Colonic mucosa (tissue), 4 donors: ENCODE measurements at regions of chr3 and their contacts with region 1.

Region 1: DNA sequence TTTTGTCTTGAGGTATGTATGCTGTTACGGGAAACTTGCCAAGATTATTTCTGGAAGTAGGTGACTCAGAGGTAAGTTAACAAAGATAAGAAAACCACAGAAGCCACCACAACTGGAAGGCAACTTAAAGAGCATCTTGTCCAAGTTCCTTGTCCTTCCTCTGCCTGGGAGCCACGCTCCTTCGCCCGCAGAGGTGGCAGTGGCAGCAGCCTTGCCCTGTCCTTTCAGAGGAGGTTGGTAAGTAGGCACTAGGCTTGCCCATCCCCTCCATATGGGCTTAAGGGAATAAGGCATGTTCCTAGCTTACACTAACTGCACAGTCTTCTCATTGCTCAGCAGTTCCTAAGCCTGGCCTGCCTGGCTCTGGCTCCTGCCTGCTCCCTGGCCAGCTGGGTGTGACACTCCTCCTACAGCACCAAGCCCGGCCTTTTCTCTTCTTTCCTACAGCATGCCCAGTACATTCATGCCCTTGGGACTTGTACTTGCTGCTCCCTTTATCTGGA is 48.0 kb upstream of the RAB6B start:
- DNase-seq: peak; percentile 57
- H3K4me3 ChIP-seq: no peak overlapping the region
- H3K27ac ChIP-seq: no peak overlapping the region
- H3K4me1 ChIP-seq: no peaks in the 10 kb centered on the region
- H3K27me3 ChIP-seq: no peaks in the 10 kb centered on the region
- CTCF ChIP-seq: no peak

Region 2: GRCh38 chr3:133674290-133674919 is 269.3 kb before region 1 on chr3:
- intact Hi-C with region 1: no loop called
- DNase-seq: no peak
- H3K4me3 ChIP-seq: no peak overlapping the region
- H3K27ac ChIP-seq: no peak overlapping the region
- H3K4me1 ChIP-seq: no peaks in the 10 kb centered on the region
- H3K27me3 ChIP-seq: peaks cover 11% of the 10 kb centered on the region
- CTCF ChIP-seq: no peak

Region 3: GRCh38 chr3:133927540-133928066 is 16.1 kb before region 1 on chr3:
- intact Hi-C with region 1: no loop called
- DNase-seq: peak; percentile 56
- H3K4me3 ChIP-seq: peak overlapping the region; percentile 22
- H3K27ac ChIP-seq: no peak overlapping the region
- H3K4me1 ChIP-seq: no peaks in the 10 kb centered on the region
- H3K27me3 ChIP-seq: no peaks in the 10 kb centered on the region
- CTCF ChIP-seq: peak; percentile 68

Region 4: DNA sequence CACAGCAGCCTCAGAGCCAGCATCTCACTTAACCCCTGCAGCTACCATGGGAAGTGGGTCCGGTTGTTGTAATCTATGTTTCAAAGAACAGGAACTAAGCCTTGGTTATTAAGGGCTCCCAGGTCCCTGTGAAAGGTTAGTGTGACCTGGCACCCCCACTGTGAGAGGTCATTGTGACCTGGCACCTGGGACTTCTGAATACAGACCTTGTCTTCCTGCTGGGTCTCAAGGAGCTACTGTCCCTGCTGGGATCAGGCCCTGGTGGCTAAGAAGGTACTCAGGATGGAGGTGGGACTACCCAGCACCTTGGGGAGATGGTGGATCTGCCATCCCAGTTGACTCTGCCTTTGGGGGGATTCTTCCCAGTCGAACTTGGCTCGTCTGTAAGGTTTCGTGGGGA is 96.3 kb after region 1 on chr3:
- intact Hi-C with region 1: loop called (anchors 5 kb)
- DNase-seq: peak; percentile 17
- H3K4me3 ChIP-seq: no peak overlapping the region
- H3K27ac ChIP-seq: peak overlapping the region; percentile 83
- H3K4me1 ChIP-seq: peaks cover 4% of the 10 kb centered on the region
- H3K27me3 ChIP-seq: no peaks in the 10 kb centered on the region
- CTCF ChIP-seq: no peak